OCI-LY7 (cell line): ENCODE measurements at regions of chr16 and their contacts with region 1.

Region 1: DNA sequence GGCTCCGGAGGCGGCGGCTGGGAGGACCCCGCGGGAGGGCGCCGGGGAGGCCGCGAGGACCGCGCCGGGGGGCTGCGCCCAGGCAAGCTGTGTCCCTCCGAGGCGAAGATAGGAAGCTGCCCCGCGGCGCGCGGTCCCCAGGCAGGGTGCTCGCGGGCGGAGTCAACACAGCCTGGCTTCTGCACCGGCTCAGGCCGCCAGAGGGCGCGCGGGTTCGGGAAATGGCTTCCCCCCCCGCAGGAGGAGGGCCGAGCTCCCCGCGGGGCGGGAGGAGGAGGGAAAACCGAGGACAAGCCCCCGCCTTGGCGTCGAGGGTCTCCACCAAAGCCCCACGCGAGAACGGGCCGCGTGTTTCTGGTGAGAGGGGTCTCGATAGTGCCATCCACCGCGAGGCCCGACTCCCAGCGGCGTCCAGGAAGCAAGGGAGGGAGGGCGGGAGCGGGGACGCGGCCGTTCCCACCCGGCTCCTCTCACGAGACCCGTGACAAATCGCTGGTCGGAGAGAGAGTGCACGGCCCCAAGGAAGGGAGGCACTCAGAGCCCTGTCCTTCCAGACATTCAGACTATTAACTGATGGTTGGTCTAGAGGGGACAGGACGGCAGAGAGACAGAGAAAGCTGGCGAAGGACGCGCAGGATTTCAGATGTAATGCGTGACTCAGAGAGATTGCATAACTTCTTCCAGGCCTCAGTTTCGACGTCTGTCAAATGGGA is 64.4 kb upstream of the DNAJA2 start:
- DNase-seq: peak; percentile 88
- H3K4me3 ChIP-seq: peak overlapping the region; percentile 73
- H3K27ac ChIP-seq: no peak overlapping the region
- H3K4me1 ChIP-seq: peaks cover 25% of the 10 kb centered on the region
- CTCF ChIP-seq: peak; percentile 87

Region 2: GRCh38 chr16:46853713-46854443 is 184.0 kb before region 1 on chr16:
- CTCF ChIA-PET with region 1: no interaction called
- POLR2A ChIA-PET with region 1: no interaction called
- intact Hi-C with region 1: no loop called
- DNase-seq: peak; percentile 70
- H3K4me3 ChIP-seq: no peak overlapping the region
- H3K27ac ChIP-seq: no peak overlapping the region
- H3K4me1 ChIP-seq: peaks cover 12% of the 10 kb centered on the region
- CTCF ChIP-seq: peak; percentile 85

Region 3: GRCh38 chr16:47065766-47066688 is 28.1 kb after region 1 on chr16:
- CTCF ChIA-PET with region 1: no interaction called
- POLR2A ChIA-PET with region 1: no interaction called
- intact Hi-C with region 1: no loop called
- DNase-seq: no peak
- H3K4me3 ChIP-seq: no peak overlapping the region
- H3K27ac ChIP-seq: no peak overlapping the region
- H3K4me1 ChIP-seq: no peaks in the 10 kb centered on the region
- CTCF ChIP-seq: no peak

Region 4: GRCh38 chr16:47134550-47134949 is 96.6 kb after region 1 on chr16:
- CTCF ChIA-PET with region 1: no interaction called
- POLR2A ChIA-PET with region 1: no interaction called
- intact Hi-C with region 1: no loop called
- DNase-seq: no peak
- H3K4me3 ChIP-seq: no peak overlapping the region
- H3K27ac ChIP-seq: no peak overlapping the region
- H3K4me1 ChIP-seq: no peaks in the 10 kb centered on the region
- CTCF ChIP-seq: no peak

Region 5: DNA sequence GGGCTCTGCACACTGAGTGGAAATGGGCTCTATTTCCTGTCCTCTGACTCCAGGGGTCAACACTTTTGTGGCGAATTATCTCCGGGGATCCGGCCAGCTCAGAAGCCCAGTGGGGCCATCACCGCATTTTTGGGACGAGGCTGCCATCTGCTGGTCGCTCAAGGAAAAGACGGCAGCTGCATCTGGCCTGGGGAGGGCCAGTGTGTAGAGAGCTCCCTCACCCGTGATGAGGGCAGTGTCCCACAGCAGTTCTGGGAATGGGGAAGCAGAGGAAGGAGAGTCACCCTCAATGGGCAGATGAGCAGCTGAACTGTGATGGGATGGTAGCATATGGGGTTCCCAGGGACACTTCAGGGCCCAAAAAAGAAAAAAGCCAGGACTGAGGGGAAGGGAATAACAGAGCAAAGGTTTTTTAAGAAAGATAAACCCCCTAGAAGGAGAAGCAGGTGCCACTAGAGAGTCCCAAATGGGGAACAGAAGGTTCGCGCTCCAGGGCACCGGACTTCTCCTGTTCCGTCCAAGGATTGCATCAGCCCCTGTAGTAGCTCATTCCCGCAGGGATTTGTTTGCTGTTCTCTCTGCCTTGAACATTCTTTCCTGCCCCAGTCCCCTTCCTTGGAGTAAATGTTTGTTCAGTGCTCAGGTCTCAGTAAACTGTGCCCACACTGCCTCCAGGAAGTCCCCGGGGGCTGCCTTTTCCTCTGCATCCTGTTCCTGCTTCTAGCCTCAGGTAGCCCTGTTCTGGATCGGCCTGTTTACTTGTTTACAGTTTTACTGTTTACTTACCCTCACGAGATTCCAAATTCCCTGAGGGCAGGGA is 1127.2 kb after region 1 on chr16:
- CTCF ChIA-PET with region 1: interaction called, 3 read pairs
- POLR2A ChIA-PET with region 1: no interaction called
- intact Hi-C with region 1: loop called (anchors 10 kb)
- DNase-seq: peak; percentile 53
- H3K4me3 ChIP-seq: no peak overlapping the region
- H3K27ac ChIP-seq: no peak overlapping the region
- H3K4me1 ChIP-seq: no peaks in the 10 kb centered on the region
- CTCF ChIP-seq: peak; percentile 88